Naive thymus-derived CD8-positive, alpha-beta T cell (primary cell): ENCODE measurements at regions of chr1 and their contacts with region 1.

Region 1: GRCh38 chr1:13725714-13726175 is 25.8 kb downstream of the PRDM2 start:
- DNase-seq: peak; percentile 40 to 79 (median 62)
- ATAC-seq: peak; percentile 43 to 58
- H3K4me3 Mint-ChIP-seq: peak overlapping the region in 4 of 10 donors; percentile 0 to 31 (median 6)
- H3K27ac Mint-ChIP-seq: peak overlapping the region; percentile 44 to 99 (median 86)
- H3K4me1 Mint-ChIP-seq: peaks cover 34 to 92% (median 88%) of the 10 kb centered on the region in 4 donors
- H3K27me3 Mint-ChIP-seq: no peaks in the 10 kb centered on the region

Region 2: DNA sequence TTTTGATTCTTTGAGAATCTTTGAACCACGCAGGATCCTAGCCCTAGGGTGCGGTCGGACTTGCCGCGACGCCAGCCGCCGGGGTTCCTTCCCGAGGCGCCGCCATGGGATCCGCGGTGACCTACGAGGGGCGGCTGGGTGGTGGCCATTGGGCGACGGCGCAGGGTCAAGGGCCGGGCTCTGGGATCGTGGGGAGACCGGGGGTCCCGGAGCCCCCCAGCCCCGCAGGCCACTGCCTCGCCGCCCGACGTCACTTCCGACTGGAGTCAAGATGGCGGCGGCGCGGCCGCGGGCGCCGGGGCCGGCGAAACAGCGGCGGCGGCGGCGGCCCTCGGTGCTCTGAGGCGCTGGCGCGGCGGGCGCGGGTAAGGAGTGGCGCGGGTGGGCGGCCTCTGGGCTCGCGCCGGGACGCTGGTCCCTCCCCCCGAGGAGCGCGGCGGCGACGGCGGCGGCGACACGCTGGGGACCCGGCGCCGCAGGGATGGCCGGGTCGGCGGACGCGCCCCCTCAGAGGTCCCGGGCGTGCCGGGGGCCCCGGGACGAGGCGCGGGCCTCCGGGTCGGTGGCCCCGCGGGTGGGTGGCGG is 25.7 kb before region 1 on chr1 and contains the start of gene PRDM2:
- POLR2A ChIA-PET with region 1: interaction called, 74 read pairs
- DNase-seq: peak; percentile 47 to 79 (median 68)
- ATAC-seq: peak; percentile 40 to 58
- H3K4me3 Mint-ChIP-seq: peak within 1 kb of the TSS; percentile 89 to 99 (median 96)
- H3K27ac Mint-ChIP-seq: peak within 1 kb of the TSS; percentile 97 to 100 (median 99)
- H3K4me1 Mint-ChIP-seq: peaks cover 27 to 60% (median 51%) of the 10 kb centered on the region in 4 donors
- H3K27me3 Mint-ChIP-seq: no peaks in the 10 kb centered on the region
- polyA plus RNA-seq, gene PRDM2: 16.8 to 23.0 (median 20.1) TPM

Region 3: DNA sequence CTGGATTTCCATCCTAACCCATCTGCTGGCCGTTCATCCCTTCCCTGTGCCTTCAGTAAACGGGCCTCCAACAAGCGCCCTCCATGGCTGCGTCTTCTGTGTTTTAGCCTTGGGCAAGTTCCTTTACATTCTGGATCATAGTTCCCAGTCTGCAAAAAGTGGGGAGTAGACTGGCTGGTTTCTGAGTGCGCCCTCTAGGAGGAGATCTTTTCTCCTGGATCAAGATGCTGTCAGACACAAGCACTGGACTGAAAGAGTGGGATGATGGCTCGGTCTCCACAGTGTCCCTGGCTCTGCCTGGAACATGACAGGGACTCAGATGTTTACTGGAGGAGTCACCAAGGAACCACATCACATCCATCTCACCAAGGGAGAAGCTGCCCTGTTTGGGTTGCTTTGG is 63.0 kb after region 1 on chr1:
- POLR2A ChIA-PET with region 1: no interaction called
- DNase-seq: no peak
- ATAC-seq: no peak
- H3K4me3 Mint-ChIP-seq: no peak overlapping the region
- H3K27ac Mint-ChIP-seq: peak overlapping the region in 4 of 10 donors; percentile 4 to 82 (median 50)
- H3K4me1 Mint-ChIP-seq: peaks cover 36 to 64% (median 55%) of the 10 kb centered on the region in 4 donors
- H3K27me3 Mint-ChIP-seq: no peaks in the 10 kb centered on the region